ENCODE measurements at regions of chr12 and their contacts with region 1.

Region 1: GRCh38 chr12:115752913-115753726 is 524.4 kb downstream of the MED13L start:
- DNase-seq: peak in 4 of 10 donors; percentile 7 to 32 (median 30)

Region 2: DNA sequence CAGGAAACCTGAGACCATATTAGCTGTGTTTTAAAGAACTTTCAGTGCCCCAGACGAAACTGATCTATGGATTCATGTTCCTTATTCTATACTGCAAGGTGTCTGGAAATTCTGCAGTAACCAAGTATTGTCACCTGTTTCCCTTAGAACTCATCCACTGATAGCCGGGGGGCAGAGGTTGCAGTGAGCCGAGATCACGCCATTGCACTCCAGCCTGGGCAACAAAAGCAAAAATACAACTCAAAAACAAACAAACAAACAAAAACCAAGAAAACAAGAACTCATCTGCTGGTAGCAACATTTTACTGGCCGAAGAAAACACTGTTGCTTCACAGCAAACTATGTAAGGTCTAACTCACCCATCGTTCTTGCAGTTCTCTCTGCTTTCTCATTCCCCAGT is 1232.9 kb before region 1 on chr12:
- intact Hi-C with region 1: no loop called
- DNase-seq: no peak

Region 3: GRCh38 chr12:114668151-114668885 is 1084.8 kb before region 1 on chr12:
- intact Hi-C with region 1: loop called (anchors 1 kb)
- DNase-seq: peak in 9 of 10 donors; percentile 29 to 93 (median 65)